ENCODE measurements at regions of chr4 and their contacts with region 1.

Region 1: GRCh38 chr4:18593445-18594002 is 572.0 kb upstream of the LCORL start:
- DNase-seq: peak; percentile 41
- H3K4me3 ChIP-seq: no peak overlapping the region
- H3K27ac ChIP-seq: no peak overlapping the region
- H3K4me1 ChIP-seq: no peaks in the 10 kb centered on the region
- H3K27me3 ChIP-seq: no peaks in the 10 kb centered on the region
- CTCF ChIP-seq: peak; percentile 62

Region 2: DNA sequence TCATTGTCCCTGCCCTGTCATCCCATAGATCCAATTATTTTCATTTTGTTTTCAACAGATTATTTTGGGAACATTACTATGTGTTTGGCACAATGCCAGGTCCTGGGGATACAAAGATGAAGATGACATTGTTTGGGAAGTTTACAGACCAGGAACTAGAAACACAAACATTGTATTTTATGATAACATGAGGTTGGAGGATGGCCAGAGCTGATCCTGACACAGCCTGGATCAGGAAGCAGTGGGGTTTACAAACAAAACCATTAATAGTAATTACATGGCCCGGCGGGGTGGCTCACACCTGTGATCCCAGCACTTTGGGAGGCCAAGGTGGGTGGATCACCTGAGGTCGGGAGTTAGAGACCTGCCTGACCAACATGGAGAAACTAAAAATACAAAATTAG is 1048.7 kb before region 1 on chr4:
- intact Hi-C with region 1: loop called (anchors 5 kb)
- DNase-seq: no peak
- H3K4me3 ChIP-seq: no peak overlapping the region
- H3K27ac ChIP-seq: no peak overlapping the region
- H3K4me1 ChIP-seq: no peaks in the 10 kb centered on the region
- H3K27me3 ChIP-seq: no peaks in the 10 kb centered on the region
- CTCF ChIP-seq: no peak

Region 3: GRCh38 chr4:17817020-17817419 is 776.5 kb before region 1 on chr4:
- intact Hi-C with region 1: loop called (anchors 5 kb)
- DNase-seq: no peak
- H3K4me3 ChIP-seq: no peak overlapping the region
- H3K27ac ChIP-seq: no peak overlapping the region
- H3K4me1 ChIP-seq: peaks cover 5% of the 10 kb centered on the region
- H3K27me3 ChIP-seq: no peaks in the 10 kb centered on the region
- CTCF ChIP-seq: peak; percentile 26

Region 4: GRCh38 chr4:18722748-18723191 is 129.2 kb after region 1 on chr4:
- intact Hi-C with region 1: no loop called
- DNase-seq: no peak
- H3K4me3 ChIP-seq: no peak overlapping the region
- H3K27ac ChIP-seq: no peak overlapping the region
- H3K4me1 ChIP-seq: no peaks in the 10 kb centered on the region
- H3K27me3 ChIP-seq: no peaks in the 10 kb centered on the region
- CTCF ChIP-seq: no peak

Measured in colonic mucosa (tissue), 4 donors.